ENCODE measurements at regions of chr12 and their contacts with region 1.

Region 1: GRCh38 chr12:4112734-4113325 is 160.7 kb upstream of the CCND2 start:
- DNase-seq: no peak
- H3K4me3 ChIP-seq: no peak overlapping the region
- H3K27ac ChIP-seq: no peak overlapping the region
- H3K4me1 ChIP-seq: peaks cover 0 to 2% of the 10 kb centered on the region in 2 donors
- H3K27me3 ChIP-seq: peaks cover 0 to 4% of the 10 kb centered on the region in 2 donors
- CTCF ChIP-seq: no peak
- POLR2A ChIP-seq: no peak

Region 2: GRCh38 chr12:3299929-3300832 is 812.6 kb before region 1 on chr12:
- intact Hi-C with region 1: loop called (anchors 5 kb)
- DNase-seq: peak; percentile 92 to 93
- H3K4me3 ChIP-seq: peak overlapping the region; percentile 5 to 32 (median 27)
- H3K27ac ChIP-seq: peak overlapping the region; percentile 81 to 91
- H3K4me1 ChIP-seq: peaks cover 0 to 9% of the 10 kb centered on the region in 2 donors
- H3K27me3 ChIP-seq: no peaks in the 10 kb centered on the region
- CTCF ChIP-seq: peak; percentile 87 to 97 (median 96)
- POLR2A ChIP-seq: no peak

Region 3: DNA sequence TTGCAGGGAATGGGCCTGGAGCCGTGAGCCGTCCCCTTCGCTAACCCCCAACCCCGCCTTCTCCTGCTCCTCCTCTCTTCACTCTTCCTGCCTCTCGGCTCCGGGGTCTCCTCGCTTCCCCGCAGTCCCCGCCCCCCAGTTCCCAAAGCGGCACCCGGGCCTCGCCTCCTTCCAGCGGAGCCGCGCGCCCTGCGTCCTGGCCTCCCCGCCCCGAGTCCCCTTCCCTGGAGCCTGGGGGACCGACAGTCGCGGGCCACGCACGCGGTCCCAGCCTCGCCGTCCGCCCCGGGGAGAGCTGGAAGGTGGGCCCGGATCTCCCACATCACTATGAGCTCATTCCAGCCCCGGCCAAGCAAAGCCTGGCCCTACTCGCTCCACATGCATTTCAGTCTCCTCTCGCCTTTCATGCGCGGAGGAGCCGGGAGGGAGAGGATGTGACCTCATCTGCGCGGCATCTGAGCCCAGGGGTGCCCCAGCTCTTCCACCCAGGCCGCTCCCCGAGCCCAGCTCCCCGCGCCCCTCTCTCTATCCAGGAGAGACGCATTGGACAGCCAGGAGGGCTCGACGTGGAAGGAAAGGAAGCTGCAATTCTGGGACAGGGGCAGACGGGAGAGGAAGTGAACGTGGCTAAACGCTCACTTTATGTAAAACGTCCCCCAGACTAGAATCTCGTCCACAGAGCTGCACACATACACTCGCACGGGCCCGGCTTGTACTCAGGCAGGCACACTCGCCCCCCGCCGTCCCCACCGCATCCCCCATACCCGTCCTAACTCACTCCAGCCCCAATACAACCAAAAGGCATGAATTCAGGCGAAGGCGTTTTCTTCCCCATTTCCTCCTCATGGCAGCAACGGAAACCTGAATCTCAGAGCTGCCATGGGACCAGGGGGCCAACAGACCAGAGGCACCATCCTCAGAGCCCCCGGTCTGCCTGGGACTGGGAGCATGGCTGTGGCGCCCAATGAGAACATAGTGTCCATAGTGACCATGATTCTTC is 52.0 kb after region 1 on chr12:
- intact Hi-C with region 1: no loop called
- DNase-seq: peak in 1 of 2 donors; percentile 45
- H3K4me3 ChIP-seq: peak overlapping the region; percentile 38 to 72 (median 53)
- H3K27ac ChIP-seq: peak overlapping the region; percentile 77 to 90
- H3K4me1 ChIP-seq: no peaks in the 10 kb centered on the region
- H3K27me3 ChIP-seq: no peaks in the 10 kb centered on the region
- CTCF ChIP-seq: no peak
- POLR2A ChIP-seq: no peak